GM10248 (cell line): ENCODE measurements at regions of chr12 and their contacts with region 1.

Region 1: GRCh38 chr12:52372216-52373154 is 5.2 kb upstream of the KRT85 start:
- DNase-seq: peak; percentile 69
- CTCF ChIP-seq: peak; percentile 79

Region 2: DNA sequence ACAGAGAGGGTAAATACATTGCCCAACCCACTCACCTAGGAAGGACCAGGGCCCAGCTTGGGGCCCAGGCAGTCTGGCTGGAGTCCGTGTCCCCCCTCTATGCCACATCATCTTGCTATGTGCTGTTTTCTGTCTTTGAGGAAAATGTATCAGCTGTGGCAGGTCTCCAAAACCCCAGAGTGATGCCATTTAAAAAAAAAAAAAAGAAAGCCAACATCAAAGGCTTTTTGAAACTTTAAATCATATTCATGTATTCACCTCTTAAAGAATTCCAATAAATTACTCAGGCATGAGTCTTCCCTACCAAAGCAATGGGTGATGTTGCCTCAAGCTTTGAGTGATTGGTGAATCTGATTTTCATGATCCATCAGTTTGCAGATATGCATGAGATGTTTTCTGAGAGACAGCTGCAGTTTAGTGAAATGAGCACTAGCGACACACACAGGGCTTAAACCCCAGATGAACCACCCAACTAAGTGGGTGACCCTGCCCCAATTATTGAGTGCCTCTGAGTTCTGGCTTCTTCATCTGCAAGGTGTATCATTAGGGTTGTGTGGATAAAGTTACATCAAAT is 87.2 kb before region 1 on chr12:
- CTCF ChIA-PET with region 1: no interaction called
- POLR2A ChIA-PET with region 1: no interaction called
- DNase-seq: no peak
- CTCF ChIP-seq: no peak

Region 3: DNA sequence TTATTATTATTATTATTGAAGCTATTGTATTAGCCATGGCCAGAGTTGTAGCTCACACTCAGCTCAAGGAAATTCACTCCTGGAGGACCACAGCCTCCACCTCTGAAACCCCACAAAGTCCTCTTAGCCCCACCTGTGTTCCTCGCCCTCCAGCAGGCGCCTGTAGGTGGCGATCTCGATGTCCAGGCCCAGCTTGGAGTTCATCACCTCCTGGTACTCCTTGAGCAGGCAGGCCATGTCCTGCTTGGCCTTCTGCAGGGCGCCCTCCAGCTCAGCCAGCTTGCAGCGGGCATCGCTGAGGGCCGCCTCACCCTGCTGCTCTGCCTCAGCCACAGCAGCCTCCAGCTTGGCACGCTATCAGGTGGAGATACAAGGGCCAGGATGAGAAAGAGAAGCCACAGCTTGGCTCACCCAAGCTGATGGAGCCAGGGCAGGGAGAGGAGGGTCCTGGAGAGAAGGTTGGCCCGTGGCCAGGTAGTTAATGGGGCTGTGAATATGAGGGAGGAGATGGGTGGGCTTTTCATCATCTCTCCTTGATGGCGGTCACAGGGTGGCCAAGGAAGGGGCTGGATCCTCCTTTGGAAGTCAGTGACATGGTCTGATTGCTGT is 10.3 kb before region 1 on chr12:
- CTCF ChIA-PET with region 1: interaction called, 15 read pairs
- POLR2A ChIA-PET with region 1: no interaction called
- DNase-seq: no peak
- CTCF ChIP-seq: peak; percentile 6